ENCODE measurements at regions of chr3 and their contacts with region 1.

Region 1: GRCh38 chr3:49028673-49029562 is at the start of gene IMPDH2:
- DNase-seq: peak; percentile 98
- total RNA-seq, gene IMPDH2: 49.5 TPM

Region 2: DNA sequence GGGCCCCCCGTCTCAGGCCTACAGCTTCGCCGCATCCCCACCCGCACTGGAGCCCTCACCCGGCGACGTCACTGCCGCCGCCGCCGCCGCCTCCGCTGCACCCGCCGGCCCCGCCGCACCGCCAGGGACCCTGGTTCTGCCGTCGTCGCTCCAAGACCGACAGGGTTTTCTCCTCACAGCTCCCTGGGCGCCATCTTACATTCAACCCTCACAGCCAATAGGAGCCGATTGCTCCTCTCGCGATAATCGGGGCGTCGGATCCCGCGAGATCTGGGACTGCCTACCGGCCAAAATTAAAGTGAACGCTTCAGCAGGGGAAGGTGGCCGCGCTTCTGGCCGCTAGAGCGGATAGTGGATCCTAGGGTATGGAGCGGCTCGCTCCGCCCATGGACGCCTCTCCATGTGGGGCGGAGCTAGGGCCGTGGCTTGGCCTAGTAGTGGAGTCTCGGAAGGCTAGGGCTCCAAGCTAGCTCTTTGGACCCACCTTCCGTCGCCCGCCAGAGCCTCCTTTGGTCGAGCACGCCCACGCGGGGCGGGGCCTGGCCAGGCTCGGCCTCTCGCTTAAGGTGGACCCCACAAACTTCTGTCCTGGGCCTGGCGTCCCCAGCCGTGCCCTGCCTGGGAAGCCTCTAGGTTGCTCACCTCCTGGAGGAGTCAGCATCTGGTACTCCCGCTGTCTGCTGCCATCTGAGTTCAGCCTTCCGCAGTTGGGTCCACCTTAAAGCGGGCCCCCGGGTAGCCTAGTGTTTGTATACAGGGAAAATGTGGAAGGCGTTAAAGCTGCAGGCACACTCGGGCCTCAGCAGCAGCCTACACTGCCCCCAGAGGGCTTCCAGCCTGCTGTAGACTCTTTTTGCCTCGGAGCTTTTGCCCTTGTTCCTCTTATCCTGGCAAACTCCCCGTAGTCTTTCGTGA is 65.2 kb after region 1 on chr3 and contains the start of gene QRICH1:
- intact Hi-C with region 1: loop called (anchors 5 kb)
- DNase-seq: peak; percentile 98
- total RNA-seq, gene QRICH1: 54.5 TPM

Measured in cardiac septum (tissue), 1 donor.